Activated CD4-positive, alpha-beta T cell treated with anti-CD3 and anti-CD28 coated beads for 36 hours (primary cell): ENCODE measurements at regions of chr16 and their contacts with region 1.

Region 1: GRCh38 chr16:46789499-46790414 is 41.2 kb downstream of the C16orf87 start:
- DNase-seq: peak; percentile 89
- ATAC-seq: peak; percentile 98
- H3K4me3 Mint-ChIP-seq: peak overlapping the region; percentile 69
- H3K27ac Mint-ChIP-seq: peak overlapping the region; percentile 60
- H3K4me1 Mint-ChIP-seq: peaks cover 26% of the 10 kb centered on the region
- H3K27me3 Mint-ChIP-seq: no peaks in the 10 kb centered on the region

Region 2: DNA sequence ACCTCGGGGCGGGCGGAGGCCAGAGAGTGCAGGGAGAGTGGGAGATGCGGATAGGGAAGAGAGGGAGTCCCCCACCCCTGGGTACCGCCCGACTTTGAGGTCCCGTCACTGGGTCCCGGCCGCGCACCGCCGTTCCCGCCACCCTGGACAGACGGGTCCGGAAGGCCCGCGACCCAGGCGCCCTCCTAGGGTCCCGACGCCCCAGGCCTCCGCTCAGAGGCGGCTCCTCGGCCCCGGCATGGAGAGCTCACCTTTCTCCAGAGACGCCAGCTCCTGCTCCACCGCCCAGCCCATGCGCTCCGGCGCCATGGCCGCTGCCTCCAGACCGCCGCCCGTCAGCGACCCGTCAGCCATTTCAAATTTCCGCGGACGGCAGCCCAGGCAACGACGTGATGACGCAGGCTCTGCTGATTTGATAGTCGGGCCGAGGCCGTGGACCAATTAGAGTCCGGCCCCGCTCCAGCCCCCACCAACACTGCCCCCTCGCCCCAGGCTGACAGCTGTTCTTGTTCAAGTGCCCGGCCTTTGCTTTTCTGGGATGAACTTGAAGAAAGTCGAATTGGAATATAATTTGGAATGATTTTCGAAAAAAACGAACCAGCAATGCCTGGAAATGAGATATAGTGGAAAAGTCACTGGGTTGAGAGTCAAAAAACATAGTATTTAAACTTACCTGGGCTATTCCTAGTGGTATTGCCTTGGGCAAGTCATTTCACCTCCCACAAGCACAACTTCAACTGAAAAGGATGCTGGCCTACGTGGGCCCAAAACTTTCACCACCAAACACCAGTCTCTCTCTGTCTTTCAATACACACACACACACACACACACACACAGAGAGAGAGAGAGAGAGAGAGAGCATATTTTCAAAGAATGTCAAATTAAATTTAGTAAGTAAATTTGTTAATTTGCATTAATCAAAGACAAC is 168.5 kb before region 1 on chr16 and contains the start of gene SHCBP1:
- CTCF ChIA-PET with region 1: no interaction called
- POLR2A ChIA-PET with region 1: no interaction called
- intact Hi-C with region 1: loop called in 1 of 2 experiments (anchors 2 kb)
- DNase-seq: peak; percentile 92
- ATAC-seq: peak; percentile 96
- H3K4me3 Mint-ChIP-seq: peak within 1 kb of the TSS; percentile 96
- H3K27ac Mint-ChIP-seq: peak within 1 kb of the TSS; percentile 86
- H3K4me1 Mint-ChIP-seq: peaks cover 16% of the 10 kb centered on the region
- H3K27me3 Mint-ChIP-seq: peaks cover 2% of the 10 kb centered on the region
- total RNA-seq, gene SHCBP1: 29.1 to 47.4 TPM

Region 3: DNA sequence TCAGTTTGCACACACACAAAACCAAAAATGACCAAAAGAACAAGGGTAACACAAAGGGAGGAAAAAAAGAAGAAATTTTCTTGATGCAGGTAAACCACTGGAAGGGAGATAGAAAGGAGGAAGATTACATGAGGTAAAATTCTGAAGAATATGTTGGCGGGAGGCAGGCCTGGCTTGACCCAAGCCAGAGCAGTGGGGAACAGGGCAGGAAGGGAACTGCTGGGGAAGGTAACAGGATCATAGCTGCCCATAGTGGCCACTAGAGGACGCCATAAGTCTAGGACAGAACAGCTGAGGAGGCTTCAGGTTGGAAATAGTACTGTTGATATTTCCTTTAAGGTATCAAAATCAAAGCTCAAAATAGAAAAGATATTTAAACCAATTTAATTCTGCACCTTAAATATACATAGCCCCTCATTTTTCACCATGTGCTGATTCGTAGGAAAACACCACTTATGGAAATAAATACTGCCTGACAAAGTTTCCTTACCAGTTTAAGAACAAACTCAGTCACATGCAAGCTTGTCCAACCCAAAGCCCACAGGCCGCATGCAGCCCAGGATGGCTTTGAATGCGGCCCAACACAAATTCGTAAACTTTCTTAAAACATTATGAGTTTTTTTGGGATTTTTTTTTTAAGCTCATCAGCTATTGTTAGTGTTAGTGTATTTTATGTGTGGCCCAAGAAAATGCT is 116.3 kb before region 1 on chr16:
- CTCF ChIA-PET with region 1: no interaction called
- POLR2A ChIA-PET with region 1: no interaction called
- intact Hi-C with region 1: no loop called
- DNase-seq: peak; percentile 67
- ATAC-seq: peak; percentile 95
- H3K4me3 Mint-ChIP-seq: no peak overlapping the region
- H3K27ac Mint-ChIP-seq: no peak overlapping the region
- H3K4me1 Mint-ChIP-seq: no peaks in the 10 kb centered on the region
- H3K27me3 Mint-ChIP-seq: no peaks in the 10 kb centered on the region

Region 4: GRCh38 chr16:46757339-46758050 is 32.3 kb before region 1 on chr16:
- CTCF ChIA-PET with region 1: no interaction called
- POLR2A ChIA-PET with region 1: no interaction called
- intact Hi-C with region 1: no loop called
- DNase-seq: no peak
- ATAC-seq: no peak
- H3K4me3 Mint-ChIP-seq: no peak overlapping the region
- H3K27ac Mint-ChIP-seq: no peak overlapping the region
- H3K4me1 Mint-ChIP-seq: peaks cover 5% of the 10 kb centered on the region
- H3K27me3 Mint-ChIP-seq: peaks cover 3% of the 10 kb centered on the region

Region 5: GRCh38 chr16:46812781-46813540 is 23.2 kb after region 1 on chr16:
- CTCF ChIA-PET with region 1: interaction called, 4 read pairs
- POLR2A ChIA-PET with region 1: no interaction called
- intact Hi-C with region 1: loop called in 1 of 2 experiments (anchors 2 kb)
- DNase-seq: peak; percentile 36
- ATAC-seq: peak; percentile 81
- H3K4me3 Mint-ChIP-seq: peak overlapping the region; percentile 2
- H3K27ac Mint-ChIP-seq: peak overlapping the region; percentile 86
- H3K4me1 Mint-ChIP-seq: peaks cover 58% of the 10 kb centered on the region
- H3K27me3 Mint-ChIP-seq: no peaks in the 10 kb centered on the region

Region 6: GRCh38 chr16:46822270-46822669 is 32.5 kb after region 1 on chr16:
- CTCF ChIA-PET with region 1: interaction called, 3 read pairs
- POLR2A ChIA-PET with region 1: no interaction called
- intact Hi-C with region 1: loop called in 1 of 2 experiments (anchors 2 kb)
- DNase-seq: peak; percentile 68
- ATAC-seq: peak; percentile 95
- H3K4me3 Mint-ChIP-seq: no peak overlapping the region
- H3K27ac Mint-ChIP-seq: no peak overlapping the region
- H3K4me1 Mint-ChIP-seq: peaks cover 37% of the 10 kb centered on the region
- H3K27me3 Mint-ChIP-seq: no peaks in the 10 kb centered on the region

Region 7: DNA sequence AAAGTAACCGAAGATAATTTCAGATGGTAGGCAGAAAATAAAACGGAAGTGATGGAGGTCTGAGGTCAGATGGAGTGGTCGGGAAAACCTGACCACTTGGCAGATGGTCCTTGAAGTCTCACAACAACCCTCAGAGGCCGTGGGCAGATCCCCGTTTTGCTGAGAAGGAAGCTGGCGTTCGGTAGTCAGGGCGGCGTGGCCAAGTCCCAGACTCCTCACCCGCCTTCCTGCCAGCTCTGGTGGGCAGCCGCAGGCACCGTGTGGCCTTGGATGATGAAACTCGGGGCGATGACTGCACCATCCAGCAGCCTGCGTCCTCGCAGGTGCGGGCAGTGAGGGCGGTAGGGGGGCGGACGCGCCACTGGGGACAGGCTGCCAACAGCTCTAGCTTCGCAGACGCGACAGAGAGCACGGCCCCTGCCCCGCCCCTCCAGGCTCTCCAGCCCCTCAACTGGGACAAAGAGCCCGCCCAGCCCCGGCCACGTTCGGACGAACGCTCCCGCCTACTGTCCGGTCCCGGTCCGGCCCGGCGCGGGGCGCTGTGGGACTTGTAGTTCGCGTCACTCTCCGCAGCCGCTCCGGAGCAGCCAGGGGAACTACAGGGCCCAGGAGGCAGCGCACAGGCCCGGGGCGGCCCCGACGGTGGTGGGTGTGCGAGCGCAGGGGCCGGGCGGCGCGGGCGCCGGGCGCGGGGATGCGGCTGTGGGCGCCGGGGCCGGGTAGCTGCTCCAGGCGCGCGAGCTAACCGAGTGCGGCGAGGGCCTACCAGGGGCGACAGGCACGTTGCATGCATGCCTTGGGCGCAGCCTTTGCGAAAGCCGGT is 94.1 kb after region 1 on chr16 and contains the start of gene GPT2:
- CTCF ChIA-PET with region 1: interaction called, 3 read pairs
- POLR2A ChIA-PET with region 1: no interaction called
- intact Hi-C with region 1: loop called in 1 of 2 experiments (anchors 1 kb)
- DNase-seq: peak; percentile 91
- ATAC-seq: peak; percentile 96
- H3K4me3 Mint-ChIP-seq: peak within 1 kb of the TSS; percentile 80
- H3K27ac Mint-ChIP-seq: peak within 1 kb of the TSS; percentile 94
- H3K4me1 Mint-ChIP-seq: peaks cover 10% of the 10 kb centered on the region
- H3K27me3 Mint-ChIP-seq: peaks cover 24% of the 10 kb centered on the region
- total RNA-seq, gene GPT2: 25.6 to 34.9 TPM